ENCODE measurements at regions of chr21 and their contacts with region 1.

Region 1: GRCh38 chr21:29091032-29091431 is 17.6 kb upstream of the CCT8 start:
- DNase-seq: no peak
- H3K4me3 ChIP-seq: no peak overlapping the region
- H3K27ac ChIP-seq: no peak overlapping the region
- H3K4me1 ChIP-seq: peaks cover 8% of the 10 kb centered on the region
- H3K27me3 ChIP-seq: no peaks in the 10 kb centered on the region
- CTCF ChIP-seq: no peak

Region 2: DNA sequence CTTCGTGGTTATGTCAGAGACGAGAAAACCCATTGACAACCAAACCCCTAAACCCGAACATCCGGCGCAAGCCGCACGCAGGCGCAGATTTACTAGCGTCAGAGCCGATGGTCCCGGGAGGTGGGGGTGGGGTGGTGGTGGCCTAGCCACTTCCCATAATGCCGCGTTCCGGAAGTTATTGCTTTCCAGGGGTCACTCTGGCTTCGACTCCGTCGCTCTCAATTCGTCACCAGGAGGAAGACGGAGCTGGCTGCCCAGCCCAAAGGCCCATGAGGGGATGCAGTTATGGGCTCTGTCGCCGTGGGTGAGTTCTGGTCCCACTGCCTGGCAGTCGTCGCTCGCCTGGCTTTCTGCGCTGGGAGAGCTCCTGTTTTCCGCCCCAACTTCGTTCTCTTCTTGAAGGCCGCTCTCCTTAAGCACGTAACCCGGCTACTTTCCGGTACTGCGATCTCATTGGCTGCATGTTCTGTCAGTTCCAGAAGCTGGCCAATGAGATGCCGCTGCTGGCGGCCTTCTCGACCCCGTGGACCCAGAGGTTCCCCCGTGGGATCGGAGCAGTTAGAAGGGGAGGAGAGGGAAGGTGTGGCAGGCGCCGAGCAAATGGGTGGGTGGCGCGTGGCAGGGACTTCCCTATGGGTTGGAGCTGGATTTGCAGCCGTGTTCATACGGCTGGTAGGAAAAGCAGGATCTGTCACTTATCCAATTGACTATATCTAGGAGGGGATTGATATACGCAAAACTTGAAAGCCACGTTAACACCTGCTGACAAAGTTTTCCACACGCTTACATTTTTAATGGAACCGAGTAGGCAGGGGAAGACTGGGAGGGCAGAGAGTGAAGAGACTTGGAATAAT is 66.3 kb before region 1 on chr21 and contains the start of gene USP16:
- intact Hi-C with region 1: no loop called
- DNase-seq: peak; percentile 96
- H3K4me3 ChIP-seq: peak within 1 kb of the TSS; percentile 85
- H3K27ac ChIP-seq: peak within 1 kb of the TSS; percentile 100
- H3K4me1 ChIP-seq: peaks cover 40% of the 10 kb centered on the region
- H3K27me3 ChIP-seq: no peaks in the 10 kb centered on the region
- CTCF ChIP-seq: peak; percentile 45
- total RNA-seq, gene USP16: 33.7 TPM

Region 3: DNA sequence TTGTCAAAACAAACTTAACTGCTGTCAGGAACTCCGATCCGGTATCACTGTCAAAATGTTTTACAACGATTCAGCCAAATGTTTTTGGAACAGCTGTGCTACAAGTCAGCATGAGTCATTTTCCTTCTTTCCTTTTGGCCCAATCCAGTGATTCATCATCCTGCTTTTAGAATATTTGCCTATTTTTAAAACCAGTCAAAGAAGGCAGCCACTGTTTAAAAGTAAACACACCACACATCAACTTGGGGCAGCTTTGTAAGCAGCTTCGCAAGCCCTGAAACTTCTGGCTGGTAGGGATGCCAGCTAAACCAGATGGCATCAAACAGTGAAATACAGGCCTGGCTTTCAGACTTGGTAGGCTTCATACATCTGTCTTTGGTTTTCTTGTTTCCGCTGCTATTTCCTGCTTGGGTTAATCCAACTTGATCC is 54.3 kb after region 1 on chr21:
- intact Hi-C with region 1: loop called (anchors 10 kb)
- DNase-seq: no peak
- H3K4me3 ChIP-seq: peak overlapping the region; percentile 12
- H3K27ac ChIP-seq: peak overlapping the region; percentile 75
- H3K4me1 ChIP-seq: peaks cover 42% of the 10 kb centered on the region
- H3K27me3 ChIP-seq: no peaks in the 10 kb centered on the region
- CTCF ChIP-seq: no peak

Region 4: GRCh38 chr21:29343519-29343918 is 252.5 kb after region 1 on chr21:
- intact Hi-C with region 1: no loop called
- DNase-seq: no peak
- H3K4me3 ChIP-seq: no peak overlapping the region
- H3K27ac ChIP-seq: peak overlapping the region; percentile 43
- H3K4me1 ChIP-seq: peaks cover 58% of the 10 kb centered on the region
- H3K27me3 ChIP-seq: no peaks in the 10 kb centered on the region
- CTCF ChIP-seq: no peak

Region 5: DNA sequence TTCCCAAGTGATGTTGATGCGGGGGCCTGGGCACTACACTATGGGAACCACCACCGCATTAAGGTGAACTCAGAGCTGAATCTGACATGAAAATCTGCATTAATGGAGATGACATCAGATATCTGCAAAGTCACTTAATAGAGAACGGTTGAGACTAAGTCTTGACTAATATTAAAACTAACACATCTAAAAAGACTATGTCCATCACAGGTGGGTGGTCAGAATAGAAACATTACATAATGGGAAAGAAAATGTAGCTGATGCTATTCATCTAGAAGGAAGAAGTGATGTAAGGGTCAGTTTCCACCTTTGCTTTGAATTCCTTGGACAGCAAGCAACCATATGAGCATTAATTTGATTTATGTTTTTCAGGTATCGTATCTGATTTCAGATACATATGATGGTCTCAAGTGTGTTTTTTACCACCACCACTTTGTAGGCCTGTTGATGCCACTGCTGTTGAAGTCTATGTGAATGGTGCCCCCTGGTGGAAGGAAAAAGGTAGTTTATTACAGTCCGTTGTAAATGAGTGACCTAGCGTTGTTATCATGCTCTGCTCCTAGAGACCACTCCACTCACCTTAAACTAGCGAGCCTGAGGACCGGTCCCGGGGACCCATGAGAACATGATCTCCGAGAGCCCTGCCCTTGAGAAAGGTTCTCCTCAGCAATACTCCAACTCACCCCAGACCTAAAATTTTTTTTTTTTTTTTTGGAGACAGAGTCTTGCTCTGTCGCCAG is 281.2 kb after region 1 on chr21:
- intact Hi-C with region 1: loop called (anchors 2 kb)
- DNase-seq: no peak
- H3K4me3 ChIP-seq: no peak overlapping the region
- H3K27ac ChIP-seq: no peak overlapping the region
- H3K4me1 ChIP-seq: peaks cover 7% of the 10 kb centered on the region
- H3K27me3 ChIP-seq: no peaks in the 10 kb centered on the region
- CTCF ChIP-seq: peak; percentile 76

Region 6: GRCh38 chr21:29571949-29572348 is 480.9 kb after region 1 on chr21:
- intact Hi-C with region 1: no loop called
- DNase-seq: no peak
- H3K4me3 ChIP-seq: no peak overlapping the region
- H3K27ac ChIP-seq: no peak overlapping the region
- H3K4me1 ChIP-seq: no peaks in the 10 kb centered on the region
- H3K27me3 ChIP-seq: no peaks in the 10 kb centered on the region
- CTCF ChIP-seq: no peak